ENCODE measurements at regions of chr13 and their contacts with region 1.

Region 1: DNA sequence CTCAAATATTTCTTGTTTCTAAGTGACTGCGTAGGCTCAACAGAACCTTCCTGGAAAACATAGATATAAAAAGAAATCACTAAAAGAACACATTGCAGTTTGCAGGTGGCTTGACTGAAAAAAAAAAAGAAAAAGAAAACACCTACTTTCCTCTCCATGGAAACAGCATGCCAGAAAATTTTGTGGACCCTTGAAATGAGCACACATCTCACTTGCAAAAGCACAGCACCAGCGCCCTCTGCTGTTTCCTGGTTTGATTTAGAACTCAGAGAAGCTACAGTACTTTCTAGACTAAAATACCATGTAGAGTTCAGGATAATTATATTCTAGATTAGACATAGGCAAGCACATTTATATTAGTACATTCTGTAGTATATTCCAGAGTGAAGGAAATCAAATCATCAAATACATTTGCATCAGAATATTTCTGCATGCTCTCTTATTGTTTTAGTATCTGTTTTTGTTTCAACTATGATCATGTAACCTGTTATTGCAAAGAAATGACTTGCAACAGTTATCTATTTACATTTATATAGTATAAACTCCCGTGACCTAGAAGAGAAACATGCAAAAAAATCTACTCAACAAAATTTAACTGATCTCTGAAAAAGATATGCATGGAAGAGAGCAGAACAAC is 22.3 kb upstream of the XPO4 start:
- DNase-seq: no peak

Region 2: GRCh38 chr13:20495082-20496023 is 429.5 kb before region 1 on chr13:
- intact Hi-C with region 1: loop called in 1 of 2 experiments (anchors 10 kb)
- DNase-seq: no peak

Region 3: GRCh38 chr13:20703780-20704445 is 221.0 kb before region 1 on chr13:
- intact Hi-C with region 1: loop called in 1 of 2 experiments (anchors 10 kb)
- DNase-seq: peak; percentile 94

Region 4: GRCh38 chr13:21106089-21106488 is 181.2 kb after region 1 on chr13:
- intact Hi-C with region 1: no loop called
- DNase-seq: no peak

Region 5: DNA sequence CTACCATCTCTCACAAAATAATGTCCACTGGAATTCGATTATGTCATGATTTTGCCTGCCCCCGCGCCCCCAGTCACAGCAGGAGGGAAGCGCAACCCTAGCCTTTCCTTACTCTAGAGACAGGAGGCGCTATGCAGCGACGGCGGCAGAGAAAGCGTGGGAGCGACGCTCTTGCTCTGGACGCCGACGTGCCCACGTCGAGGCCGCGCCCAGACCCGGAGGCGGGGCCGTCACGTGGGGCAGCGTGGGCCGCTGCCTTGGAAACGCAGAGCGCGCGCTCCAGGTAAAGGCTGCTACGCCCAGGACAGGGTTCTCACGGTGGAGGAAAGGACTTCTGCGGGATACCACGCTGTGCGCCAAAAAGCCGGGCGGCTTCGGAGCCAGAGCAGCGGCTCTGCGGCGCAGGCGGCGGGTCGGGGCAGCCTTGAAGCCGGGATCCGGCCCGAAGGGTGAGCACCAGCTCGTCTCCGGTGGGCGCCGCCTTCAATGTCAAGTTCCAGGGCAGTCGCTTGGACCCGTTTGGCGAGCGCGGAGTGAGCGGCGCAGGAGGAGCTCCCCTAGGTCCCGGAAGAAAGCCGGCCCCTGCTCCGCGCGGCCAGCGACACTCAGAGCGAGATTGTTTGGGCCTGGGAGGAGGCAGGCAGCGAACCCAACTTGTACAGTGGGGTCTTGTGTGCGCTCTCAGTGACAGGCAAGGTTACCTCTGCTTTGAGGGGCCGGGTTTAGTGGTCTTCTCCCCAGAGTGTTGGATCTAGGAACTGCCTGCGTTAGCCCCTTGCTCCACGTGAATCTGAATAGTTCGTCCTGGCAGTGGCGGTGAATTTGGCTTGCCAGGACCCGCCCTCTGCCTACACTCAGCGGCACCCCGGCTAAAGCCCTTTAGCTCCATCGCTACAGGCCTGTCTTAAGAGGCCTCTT is 373.3 kb after region 1 on chr13:
- intact Hi-C with region 1: loop called in 1 of 2 experiments (anchors 5 kb)
- DNase-seq: peak; percentile 94

Measured in posterior vena cava (tissue), 2 donors.